H1 (cell line): ENCODE measurements at regions of chr11 and their contacts with region 1.

Region 1: DNA sequence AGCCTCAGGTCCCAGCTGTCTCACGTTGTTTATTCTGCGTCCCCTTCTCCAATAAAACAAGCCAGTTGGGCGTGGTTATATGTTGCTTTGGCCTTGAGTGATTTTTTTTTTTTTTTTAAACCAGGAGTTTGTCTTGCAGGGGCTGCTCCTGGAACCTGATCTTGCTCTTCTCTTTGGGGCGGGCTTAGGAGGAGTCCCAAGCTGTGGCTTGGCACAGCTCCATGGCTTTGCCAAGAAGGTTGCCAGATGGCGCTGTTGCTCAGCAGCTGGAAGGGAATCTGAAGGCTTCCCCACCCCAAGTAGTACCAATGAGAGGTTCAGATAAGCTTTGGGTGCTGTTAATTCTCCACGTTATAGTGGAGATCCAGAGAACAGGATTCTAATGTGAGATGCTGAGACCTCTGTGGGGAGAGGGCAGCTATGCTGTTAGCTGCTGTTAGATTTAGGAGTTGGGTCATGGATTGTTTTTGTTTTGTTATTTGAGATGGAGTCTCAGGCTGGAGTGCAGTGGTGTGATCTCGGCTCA is 2.0 kb upstream of the FERMT3 start:
- DNase-seq: peak; percentile 53 to 80
- H3K4me3 ChIP-seq: no peak overlapping the region
- H3K27ac ChIP-seq: no peak overlapping the region
- H3K4me1 ChIP-seq: peaks cover 0 to 5% (median 0%) of the 10 kb centered on the region in 4 experiments; a peak in 3 of 7 replicates
- H3K27me3 ChIP-seq: no peaks in the 10 kb centered on the region; a peak in 1 of 7 replicates
- CTCF ChIP-seq: peak; percentile 79 to 90 (median 81)
- EP300 ChIP-seq: no peak
- POLR2A ChIP-seq: no peak
- RAD21 ChIP-seq: peak; percentile 80 to 88

Region 2: GRCh38 chr11:64094463-64095260 is 109.9 kb before region 1 on chr11:
- CTCF ChIA-PET with region 1: no interaction called
- POLR2A ChIA-PET with region 1: no interaction called
- DNase-seq: no peak
- H3K4me3 ChIP-seq: no peak overlapping the region
- H3K27ac ChIP-seq: no peak overlapping the region
- H3K4me1 ChIP-seq: peaks cover 0 to 8% (median 5%) of the 10 kb centered on the region in 4 experiments; a peak in 6 of 7 replicates
- H3K27me3 ChIP-seq: peaks cover 0 to 65% (median 48%) of the 10 kb centered on the region in 4 experiments; a peak in 6 of 7 replicates
- CTCF ChIP-seq: peak in 2 of 3 experiments; percentile 14 to 31; a peak in 1 of 4 replicates
- EP300 ChIP-seq: no peak
- POLR2A ChIP-seq: no peak
- RAD21 ChIP-seq: peak in 1 of 2 experiments; percentile 11; a peak in 1 of 4 replicates

Region 3: DNA sequence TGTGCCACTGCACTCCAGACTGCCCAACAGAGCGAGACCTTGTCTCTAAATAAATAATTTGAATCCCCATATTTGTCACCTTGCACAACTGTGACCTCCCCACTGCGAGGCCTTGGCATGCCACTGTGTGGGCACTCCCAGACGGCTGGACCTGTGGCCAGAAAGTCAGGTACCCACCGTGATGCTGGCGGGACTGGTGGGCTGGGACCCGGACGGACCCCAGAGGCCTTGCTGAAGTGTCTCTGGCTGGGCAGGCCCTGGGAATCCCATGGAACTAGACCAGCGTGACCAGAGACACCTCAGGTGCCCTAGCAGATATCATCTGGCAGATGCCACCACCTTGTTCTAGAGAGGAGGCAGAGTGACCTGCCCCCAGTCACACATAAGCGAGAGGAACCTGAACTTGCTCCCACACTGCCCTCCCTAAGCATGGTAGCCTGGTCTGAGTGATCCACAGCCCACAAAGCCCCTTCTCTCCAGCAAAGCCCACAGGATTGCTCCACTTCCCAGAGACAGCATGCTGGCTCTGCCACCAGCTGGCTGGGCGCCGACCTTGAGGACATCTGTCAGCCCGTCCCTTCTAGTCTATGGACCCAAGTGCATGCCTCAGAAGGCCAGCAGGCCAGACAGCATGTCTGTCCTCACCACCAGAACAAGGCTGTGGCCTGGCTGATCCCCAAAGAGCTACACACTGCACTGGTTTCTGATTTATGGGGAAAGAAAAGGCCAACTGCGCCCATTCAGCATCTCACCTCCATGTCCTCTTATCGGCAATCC is 48.1 kb before region 1 on chr11:
- CTCF ChIA-PET with region 1: no interaction called
- POLR2A ChIA-PET with region 1: no interaction called
- DNase-seq: no peak
- H3K4me3 ChIP-seq: no peak overlapping the region
- H3K27ac ChIP-seq: no peak overlapping the region
- H3K4me1 ChIP-seq: peaks cover 2 to 12% (median 8%) of the 10 kb centered on the region in 4 experiments; a peak in 5 of 7 replicates
- H3K27me3 ChIP-seq: peaks cover 0 to 10% (median 0%) of the 10 kb centered on the region in 4 experiments; a peak in 2 of 7 replicates
- CTCF ChIP-seq: no peak
- EP300 ChIP-seq: no peak
- POLR2A ChIP-seq: no peak
- RAD21 ChIP-seq: no peak

Region 4: GRCh38 chr11:64216879-64217278 is 12.4 kb after region 1 on chr11:
- CTCF ChIA-PET with region 1: interaction called, 68 read pairs
- POLR2A ChIA-PET with region 1: interaction called, 253 read pairs
- DNase-seq: no peak
- H3K4me3 ChIP-seq: no peak overlapping the region
- H3K27ac ChIP-seq: no peak overlapping the region
- H3K4me1 ChIP-seq: no peaks in the 10 kb centered on the region
- H3K27me3 ChIP-seq: no peaks in the 10 kb centered on the region
- CTCF ChIP-seq: peak in 2 of 3 experiments; percentile 8 to 10; a peak in 2 of 4 replicates
- EP300 ChIP-seq: no peak
- POLR2A ChIP-seq: no peak
- RAD21 ChIP-seq: no peak

Region 5: DNA sequence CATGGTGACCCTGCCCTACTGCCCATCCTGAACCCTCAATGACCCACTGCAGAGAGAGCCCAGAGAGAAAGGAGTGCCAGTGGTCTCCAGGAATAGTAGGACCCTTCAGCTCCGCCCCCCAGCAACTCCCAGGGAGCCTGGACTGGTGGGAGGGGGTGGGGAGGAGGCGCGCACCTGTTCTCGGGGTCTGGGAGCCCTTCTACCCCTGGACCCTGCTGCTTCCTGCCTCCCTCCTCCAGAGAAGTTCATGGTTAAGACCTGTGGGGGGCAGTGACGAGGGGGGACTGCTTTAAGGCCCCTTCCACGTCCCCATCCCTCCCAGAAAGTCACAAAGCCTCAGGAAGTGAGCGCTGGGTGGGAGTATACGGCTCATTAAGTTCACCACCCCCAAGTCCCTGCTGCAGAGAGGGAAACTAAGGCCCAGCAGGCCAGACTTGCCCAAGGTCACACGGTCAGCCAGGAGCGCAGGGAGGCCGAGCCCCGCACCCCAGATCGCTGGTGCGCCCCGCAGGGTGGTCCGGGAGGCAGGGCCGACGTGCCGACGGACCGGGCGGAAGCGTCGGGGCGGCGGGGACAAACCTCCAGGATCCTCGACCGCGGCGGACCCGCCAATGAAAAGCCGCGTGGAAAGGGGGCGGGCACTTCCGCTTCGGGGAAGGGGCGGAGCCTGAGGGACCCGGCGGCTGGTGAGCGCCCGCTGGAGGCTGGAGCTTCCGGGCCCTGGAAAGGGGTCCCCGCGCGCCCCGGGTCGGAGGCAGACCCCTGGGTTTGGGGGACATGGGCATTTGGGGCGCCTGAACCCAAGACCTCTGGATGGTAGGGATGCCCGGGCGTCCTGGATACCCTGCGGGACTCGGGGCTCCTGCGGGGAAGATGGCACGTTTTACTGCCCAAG is 21.3 kb after region 1 on chr11 and contains the starts of genes NUDT22 and TRPT1:
- CTCF ChIA-PET with region 1: interaction called, 64 read pairs
- POLR2A ChIA-PET with region 1: interaction called, 253 read pairs
- DNase-seq: peak in 1 of 2 experiments; percentile 97
- H3K4me3 ChIP-seq: peak within 1 kb of the TSS; percentile 63 to 90 (median 84)
- H3K27ac ChIP-seq: peak within 1 kb of the TSS; percentile 11; the same call in 1 of the 2 replicates
- H3K4me1 ChIP-seq: peaks cover 0 to 23% (median 14%) of the 10 kb centered on the region in 4 experiments; a peak in 6 of 7 replicates
- H3K27me3 ChIP-seq: no peaks in the 10 kb centered on the region
- CTCF ChIP-seq: peak in 1 of 3 experiments; percentile 48; a peak in 1 of 4 replicates
- EP300 ChIP-seq: no peak
- POLR2A ChIP-seq: peak in 1 of 2 experiments; percentile 44; a peak in 2 of 3 replicates
- RAD21 ChIP-seq: no peak; a peak in 2 of 4 replicates
- total RNA-seq, gene NUDT22: 43.4 and 51.5 TPM in 2 replicates
- total RNA-seq, gene TRPT1: 34.5 and 39.7 TPM in 2 replicates

Region 6: GRCh38 chr11:64240394-64241174 is 36.1 kb after region 1 on chr11 and contains the start of gene FKBP2:
- CTCF ChIA-PET with region 1: interaction called, 51 read pairs
- POLR2A ChIA-PET with region 1: interaction called, 38 read pairs
- DNase-seq: peak; percentile 88 to 97
- H3K4me3 ChIP-seq: peak within 1 kb of the TSS; percentile 67 to 82 (median 78)
- H3K27ac ChIP-seq: peak within 1 kb of the TSS; percentile 87
- H3K4me1 ChIP-seq: peaks cover 0 to 16% (median 12%) of the 10 kb centered on the region in 4 experiments; a peak in 6 of 7 replicates
- H3K27me3 ChIP-seq: no peaks in the 10 kb centered on the region; a peak in 2 of 7 replicates
- CTCF ChIP-seq: no peak; a peak in 1 of 4 replicates
- EP300 ChIP-seq: no peak
- POLR2A ChIP-seq: peak in 1 of 2 experiments; percentile 81; a peak in 2 of 3 replicates
- RAD21 ChIP-seq: no peak
- total RNA-seq, gene FKBP2: 41.7 and 43.2 TPM in 2 replicates

Region 7: GRCh38 chr11:64246871-64247728 is 42.6 kb after region 1 on chr11 and contains the start of gene PPP1R14B:
- CTCF ChIA-PET with region 1: interaction called, 57 read pairs
- POLR2A ChIA-PET with region 1: interaction called, 38 read pairs
- DNase-seq: peak in 1 of 2 experiments; percentile 94
- H3K4me3 ChIP-seq: peak within 1 kb of the TSS; percentile 56 to 99 (median 90)
- H3K27ac ChIP-seq: peak within 1 kb of the TSS; percentile 61
- H3K4me1 ChIP-seq: peaks cover 0 to 48% (median 35%) of the 10 kb centered on the region in 4 experiments; a peak in 6 of 7 replicates
- H3K27me3 ChIP-seq: no peaks in the 10 kb centered on the region
- CTCF ChIP-seq: peak in 1 of 3 experiments; percentile 12; a peak in 1 of 4 replicates
- EP300 ChIP-seq: no peak
- POLR2A ChIP-seq: no peak
- RAD21 ChIP-seq: no peak
- total RNA-seq, gene PPP1R14B: 418 and 419 TPM in 2 replicates

Region 8: GRCh38 chr11:64263021-64263946 is 58.8 kb after region 1 on chr11:
- CTCF ChIA-PET with region 1: interaction called, 13 read pairs
- POLR2A ChIA-PET with region 1: interaction called, 39 read pairs
- DNase-seq: no peak
- H3K4me3 ChIP-seq: no peak overlapping the region
- H3K27ac ChIP-seq: 0 out of 2 replicates have a peak overlapping the region, but pooled peaks have one; percentile 4
- H3K4me1 ChIP-seq: peaks cover 0 to 3% (median under 1%) of the 10 kb centered on the region in 4 experiments; a peak in 4 of 7 replicates
- H3K27me3 ChIP-seq: no peaks in the 10 kb centered on the region
- CTCF ChIP-seq: no peak
- EP300 ChIP-seq: no peak
- POLR2A ChIP-seq: no peak
- RAD21 ChIP-seq: no peak; a peak in 1 of 4 replicates

Region 9: DNA sequence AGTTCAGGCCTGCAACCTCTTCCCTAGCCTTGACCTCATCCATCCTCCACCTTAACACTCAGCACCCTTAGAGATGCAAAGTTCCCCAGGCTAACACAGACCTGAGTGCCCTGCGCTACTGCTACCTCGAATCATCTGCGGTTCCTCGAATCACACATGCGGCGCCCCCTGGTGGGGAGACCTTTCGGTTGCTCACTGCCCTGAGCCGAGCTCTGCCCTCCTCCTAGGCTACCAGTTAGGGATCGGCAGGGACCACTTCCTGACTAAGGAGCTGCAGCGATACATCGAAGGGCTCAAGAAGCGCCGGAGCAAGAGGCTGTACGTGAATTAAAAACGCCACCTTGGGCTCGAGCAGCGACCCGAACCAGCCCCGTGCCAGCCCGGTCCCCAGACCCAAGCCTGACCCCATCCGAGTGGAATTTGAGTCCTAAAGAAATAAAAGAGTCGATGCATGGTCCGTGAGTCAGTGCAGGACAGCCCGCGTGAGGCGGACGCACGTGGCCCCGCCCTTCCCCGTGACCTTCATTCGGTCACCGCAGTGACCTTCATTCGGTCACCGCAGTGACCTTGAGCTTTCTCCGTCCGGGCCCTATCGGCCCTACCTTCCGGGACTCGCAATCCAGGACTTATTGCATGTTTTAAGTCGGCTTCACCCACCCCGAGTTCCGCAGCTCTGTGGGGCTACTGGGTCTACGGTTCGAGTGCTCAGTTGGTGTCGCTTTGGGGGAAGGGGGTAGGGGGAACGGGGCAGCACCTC is 100.0 kb after region 1 on chr11:
- CTCF ChIA-PET with region 1: interaction called, 29 read pairs
- POLR2A ChIA-PET with region 1: interaction called, 8 read pairs
- DNase-seq: peak; percentile 86 to 99
- H3K4me3 ChIP-seq: peak overlapping the region; percentile 48 to 71 (median 58)
- H3K27ac ChIP-seq: peak overlapping the region; percentile 87
- H3K4me1 ChIP-seq: peaks cover 3 to 21% (median 18%) of the 10 kb centered on the region in 4 experiments; a peak in 6 of 7 replicates
- H3K27me3 ChIP-seq: peaks cover 13 to 30% (median 18%) of the 10 kb centered on the region in 4 experiments
- CTCF ChIP-seq: peak in 2 of 3 experiments; percentile 83 to 95; a peak in 3 of 4 replicates
- EP300 ChIP-seq: no peak
- POLR2A ChIP-seq: peak in 1 of 2 experiments; percentile 95; a peak in 2 of 3 replicates
- RAD21 ChIP-seq: peak; percentile 54 to 69